Naive thymus-derived CD4-positive, alpha-beta T cell (primary cell): ENCODE measurements at regions of chr6 and their contacts with region 1.

Region 1: GRCh38 chr6:137271245-137272183 is 52.3 kb upstream of the IFNGR1 start:
- DNase-seq: peak in 5 of 9 donors; percentile 8 to 41 (median 27)
- ATAC-seq: peak; percentile 76
- H3K4me3 ChIP-seq: no peak overlapping the region
- H3K4me3 Mint-ChIP-seq: no peak overlapping the region
- H3K27ac ChIP-seq: no peak overlapping the region
- H3K27ac Mint-ChIP-seq: no peak overlapping the region
- H3K4me1 ChIP-seq: peaks cover 0 to 16% of the 10 kb centered on the region in 2 donors
- H3K4me1 Mint-ChIP-seq: peaks cover 0 to 7% (median 0%) of the 10 kb centered on the region in 7 donors
- H3K27me3 ChIP-seq: no peaks in the 10 kb centered on the region
- H3K27me3 Mint-ChIP-seq: peaks cover 5 to 38% (median 6%) of the 10 kb centered on the region in 5 donors

Region 2: DNA sequence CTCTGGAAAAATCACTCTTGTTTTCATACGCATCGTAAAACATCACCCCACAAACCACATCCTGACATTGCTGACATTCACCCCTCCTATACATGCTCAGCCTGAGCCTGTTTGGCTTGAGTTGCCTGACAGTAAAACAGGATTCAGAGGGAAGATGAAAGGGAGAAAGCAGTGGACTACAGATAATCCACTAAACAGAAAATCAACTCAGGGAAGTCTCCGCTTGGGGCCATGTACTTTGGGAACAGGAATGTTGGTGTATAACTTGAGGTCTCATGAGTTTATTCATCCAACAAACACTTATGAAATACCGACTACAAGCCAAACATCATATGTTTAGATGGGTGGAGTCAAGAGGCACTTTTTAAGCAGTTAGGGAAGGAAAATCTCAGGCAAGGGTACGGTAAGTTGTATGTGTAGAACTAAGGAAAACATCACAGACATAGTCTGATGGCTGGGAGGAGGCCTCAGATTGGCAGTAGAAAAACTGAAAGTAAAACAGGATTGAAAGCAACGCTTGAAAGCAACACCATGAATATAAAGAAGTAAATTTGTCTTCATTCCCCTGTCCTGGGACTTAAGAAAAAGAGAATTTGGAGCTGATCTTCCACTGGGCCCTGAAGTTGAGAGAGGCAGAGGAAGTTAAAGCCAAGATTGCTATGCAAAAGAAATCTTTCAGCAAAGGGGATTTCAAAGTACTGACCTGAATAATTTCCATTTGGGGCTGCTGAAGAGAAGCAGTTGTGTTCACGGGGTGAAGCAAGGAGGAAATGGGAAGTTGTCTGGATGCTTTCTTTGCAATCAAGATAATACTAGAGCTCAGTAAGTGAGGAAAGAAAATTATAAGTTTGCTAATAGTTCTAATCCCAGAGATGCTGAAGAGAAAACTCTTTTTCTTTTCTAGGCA is 1391.2 kb before region 1 on chr6:
- CTCF ChIA-PET with region 1: no interaction called
- POLR2A ChIA-PET with region 1: no interaction called
- intact Hi-C with region 1: no loop called
- DNase-seq: peak in 8 of 9 donors; percentile 52 to 86 (median 79)
- ATAC-seq: peak; percentile 95
- H3K4me3 ChIP-seq: peak overlapping the region; percentile 40
- H3K4me3 Mint-ChIP-seq: peak overlapping the region; percentile 81 to 94 (median 86)
- H3K27ac ChIP-seq: peak overlapping the region; percentile 90
- H3K27ac Mint-ChIP-seq: peak overlapping the region; percentile 94 to 99 (median 98)
- H3K4me1 ChIP-seq: peaks cover 16 to 37% of the 10 kb centered on the region in 2 donors
- H3K4me1 Mint-ChIP-seq: peaks cover 31 to 90% (median 79%) of the 10 kb centered on the region in 7 donors
- H3K27me3 ChIP-seq: no peaks in the 10 kb centered on the region
- H3K27me3 Mint-ChIP-seq: no peaks in the 10 kb centered on the region

Region 3: GRCh38 chr6:137094411-137095008 is 177.0 kb before region 1 on chr6:
- CTCF ChIA-PET with region 1: no interaction called
- POLR2A ChIA-PET with region 1: no interaction called
- intact Hi-C with region 1: loop called (anchors 1 to 2 kb)
- DNase-seq: peak in 8 of 9 donors; percentile 17 to 56 (median 40)
- ATAC-seq: peak; percentile 80
- H3K4me3 ChIP-seq: no peak overlapping the region
- H3K4me3 Mint-ChIP-seq: peak overlapping the region in 1 of 10 donors; percentile 33
- H3K27ac ChIP-seq: no peak overlapping the region
- H3K27ac Mint-ChIP-seq: peak overlapping the region in 1 of 9 donors; percentile 11
- H3K4me1 ChIP-seq: peaks cover 0 to 3% of the 10 kb centered on the region in 2 donors
- H3K4me1 Mint-ChIP-seq: peaks cover 0 to 44% (median 0%) of the 10 kb centered on the region in 7 donors
- H3K27me3 ChIP-seq: no peaks in the 10 kb centered on the region
- H3K27me3 Mint-ChIP-seq: peaks cover 0 to 10% (median 0%) of the 10 kb centered on the region in 5 donors

Region 4: DNA sequence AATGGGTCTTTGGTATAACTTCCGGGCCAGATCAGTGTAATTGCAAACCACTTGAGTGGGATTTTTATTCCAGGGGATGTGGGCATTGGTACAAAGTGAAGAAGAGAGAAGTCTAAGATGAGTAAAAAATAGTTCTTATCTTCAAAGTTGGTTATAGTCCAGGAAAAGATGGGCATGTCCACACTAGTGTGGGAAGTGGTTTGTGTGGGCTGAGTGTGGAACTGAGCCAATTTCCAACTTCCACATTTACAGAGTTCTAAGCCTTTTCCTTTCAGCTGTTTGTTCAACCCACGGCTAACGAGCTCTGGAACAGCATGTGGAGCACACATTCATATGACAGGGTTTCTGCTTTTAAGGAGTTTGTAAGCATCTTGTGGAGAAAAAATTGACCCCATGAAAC is 19.9 kb after region 1 on chr6:
- CTCF ChIA-PET with region 1: no interaction called
- POLR2A ChIA-PET with region 1: no interaction called
- intact Hi-C with region 1: no loop called
- DNase-seq: no peak
- ATAC-seq: peak; percentile 82
- H3K4me3 ChIP-seq: no peak overlapping the region
- H3K4me3 Mint-ChIP-seq: no peak overlapping the region
- H3K27ac ChIP-seq: no peak overlapping the region
- H3K27ac Mint-ChIP-seq: no peak overlapping the region
- H3K4me1 ChIP-seq: peaks cover 0 to 6% of the 10 kb centered on the region in 2 donors
- H3K4me1 Mint-ChIP-seq: peaks cover 0 to 13% (median 4%) of the 10 kb centered on the region in 7 donors
- H3K27me3 ChIP-seq: no peaks in the 10 kb centered on the region
- H3K27me3 Mint-ChIP-seq: peaks cover 2 to 27% (median 5%) of the 10 kb centered on the region in 5 donors

Region 5: DNA sequence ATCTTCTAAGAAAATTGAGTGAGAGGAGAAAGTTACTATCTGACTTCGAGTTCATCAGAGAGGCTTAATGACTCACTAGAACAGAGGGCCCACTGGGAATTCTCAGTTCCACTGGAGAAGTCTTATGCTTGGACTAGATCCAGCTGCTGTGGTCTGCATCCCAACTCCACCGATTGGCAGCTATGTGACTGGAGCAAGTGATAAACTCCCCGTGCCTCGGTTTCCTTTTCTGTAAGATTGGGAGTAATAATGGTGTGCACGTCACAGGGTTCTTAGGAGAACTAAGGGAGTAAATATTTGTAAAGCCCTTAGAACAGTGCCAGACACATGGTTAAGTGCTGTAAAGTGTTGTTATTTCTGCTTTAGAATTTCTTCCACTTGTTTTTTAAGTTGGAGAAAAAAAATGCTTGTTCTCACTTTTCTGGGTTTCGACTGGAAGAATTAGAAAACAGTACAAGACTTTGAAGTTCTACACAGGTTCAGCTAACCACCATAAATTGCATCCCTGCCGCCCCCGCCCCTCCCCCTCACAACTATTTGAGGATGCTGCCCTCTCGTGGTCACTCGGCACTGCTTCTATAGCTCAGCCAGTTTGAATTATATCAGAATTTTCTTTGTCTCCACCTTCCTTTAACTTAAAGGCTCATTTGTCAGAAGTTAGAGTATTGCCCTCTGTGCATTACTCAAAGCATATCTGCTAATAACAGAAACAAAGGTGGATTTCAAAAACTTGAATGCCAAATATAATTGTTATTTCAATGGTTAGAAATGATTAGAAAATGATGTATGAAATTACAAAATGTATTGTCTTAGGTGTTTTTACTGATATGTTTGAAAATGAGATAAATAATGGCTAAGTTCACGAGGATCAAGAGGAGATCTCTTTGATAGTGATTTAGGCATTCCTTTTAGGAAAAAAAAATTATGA is 42.7 kb after region 1 on chr6:
- CTCF ChIA-PET with region 1: interaction called, 4 read pairs
- POLR2A ChIA-PET with region 1: interaction called, 4 read pairs
- intact Hi-C with region 1: loop called (anchors 1 kb)
- DNase-seq: peak; percentile 9 to 57 (median 51)
- ATAC-seq: peak; percentile 90
- H3K4me3 ChIP-seq: no peak overlapping the region
- H3K4me3 Mint-ChIP-seq: no peak overlapping the region
- H3K27ac ChIP-seq: no peak overlapping the region
- H3K27ac Mint-ChIP-seq: no peak overlapping the region
- H3K4me1 ChIP-seq: no peaks in the 10 kb centered on the region
- H3K4me1 Mint-ChIP-seq: peaks cover 0 to 10% (median 3%) of the 10 kb centered on the region in 7 donors
- H3K27me3 ChIP-seq: no peaks in the 10 kb centered on the region
- H3K27me3 Mint-ChIP-seq: peaks cover 0 to 22% (median 0%) of the 10 kb centered on the region in 5 donors

Region 6: DNA sequence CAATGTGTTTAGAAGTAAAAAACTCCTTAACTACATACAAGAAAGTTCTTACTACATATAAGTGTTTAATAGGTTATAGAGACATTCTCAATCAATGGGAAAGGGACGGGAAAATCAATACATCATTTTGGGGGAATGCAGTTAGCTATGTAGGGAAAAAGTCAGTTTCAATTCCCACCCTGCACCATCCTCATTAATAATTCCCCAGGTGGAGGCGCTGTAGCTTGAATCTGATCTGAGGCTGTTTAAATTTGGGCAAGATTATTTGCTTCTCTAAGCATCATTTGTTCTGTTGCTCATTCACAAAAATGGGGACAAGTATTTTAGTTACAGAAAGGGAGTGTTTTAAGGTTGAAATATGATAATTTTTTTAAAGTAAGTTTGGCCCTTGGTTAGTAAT is 203.6 kb after region 1 on chr6:
- CTCF ChIA-PET with region 1: no interaction called
- POLR2A ChIA-PET with region 1: no interaction called
- intact Hi-C with region 1: loop called in 1 of 2 experiments (anchors 1 kb)
- DNase-seq: no peak
- ATAC-seq: no peak
- H3K4me3 ChIP-seq: no peak overlapping the region
- H3K4me3 Mint-ChIP-seq: no peak overlapping the region
- H3K27ac ChIP-seq: no peak overlapping the region
- H3K27ac Mint-ChIP-seq: no peak overlapping the region
- H3K4me1 ChIP-seq: no peaks in the 10 kb centered on the region
- H3K4me1 Mint-ChIP-seq: no peaks in the 10 kb centered on the region
- H3K27me3 ChIP-seq: peaks cover 0 to 4% of the 10 kb centered on the region in 2 donors
- H3K27me3 Mint-ChIP-seq: peaks cover 15 to 62% (median 27%) of the 10 kb centered on the region in 5 donors

Region 7: GRCh38 chr6:137589067-137589848 is 317.7 kb after region 1 on chr6:
- CTCF ChIA-PET with region 1: interaction called, 6 read pairs
- POLR2A ChIA-PET with region 1: no interaction called
- intact Hi-C with region 1: loop called (anchors 1 kb)
- DNase-seq: peak in 7 of 9 donors; percentile 33 to 73 (median 60)
- ATAC-seq: peak; percentile 99
- H3K4me3 ChIP-seq: no peak overlapping the region
- H3K4me3 Mint-ChIP-seq: peak overlapping the region in 6 of 10 donors; percentile 5 to 52 (median 19)
- H3K27ac ChIP-seq: no peak overlapping the region
- H3K27ac Mint-ChIP-seq: peak overlapping the region in 2 of 9 donors; percentile 13 to 39
- H3K4me1 ChIP-seq: peaks cover 0 to 6% of the 10 kb centered on the region in 2 donors
- H3K4me1 Mint-ChIP-seq: peaks cover 5 to 19% (median 9%) of the 10 kb centered on the region in 7 donors
- H3K27me3 ChIP-seq: no peaks in the 10 kb centered on the region
- H3K27me3 Mint-ChIP-seq: peaks cover 4 to 59% (median 5%) of the 10 kb centered on the region in 5 donors

Region 8: DNA sequence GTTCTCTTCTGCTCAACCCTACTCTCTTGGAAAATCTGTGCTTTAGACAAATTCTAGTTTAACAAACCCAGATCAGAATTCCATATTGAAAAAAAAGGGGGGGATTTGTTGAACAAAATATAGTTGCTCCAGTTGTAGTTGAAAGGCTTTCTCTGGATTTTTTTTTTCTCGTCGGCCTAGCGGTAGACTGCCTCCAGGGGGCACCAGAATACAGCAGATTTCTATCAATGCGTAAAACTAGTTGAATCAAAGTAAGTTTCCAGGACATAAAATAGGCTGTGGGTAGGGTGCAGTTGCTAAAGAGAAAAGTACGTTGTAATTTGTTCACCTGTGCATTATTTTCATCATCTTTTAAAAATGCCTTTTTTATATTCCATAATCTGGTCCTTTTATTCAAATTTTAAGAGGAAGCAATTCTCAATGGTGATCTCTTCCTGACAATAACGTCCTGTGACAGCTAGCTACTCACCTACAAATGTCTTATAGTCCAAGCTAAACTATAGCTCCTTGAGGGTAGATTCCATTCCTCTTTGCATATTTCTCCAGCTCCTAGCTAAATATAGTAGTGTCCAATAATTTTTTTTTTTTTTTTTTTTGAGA is 730.3 kb after region 1 on chr6:
- CTCF ChIA-PET with region 1: no interaction called
- POLR2A ChIA-PET with region 1: no interaction called
- intact Hi-C with region 1: loop called in 1 of 2 experiments (anchors 10 kb)
- DNase-seq: peak in 8 of 9 donors; percentile 37 to 65 (median 56)
- ATAC-seq: peak; percentile 79
- H3K4me3 ChIP-seq: no peak overlapping the region
- H3K4me3 Mint-ChIP-seq: no peak overlapping the region
- H3K27ac ChIP-seq: no peak overlapping the region
- H3K27ac Mint-ChIP-seq: peak overlapping the region in 1 of 9 donors; percentile 27
- H3K4me1 ChIP-seq: no peaks in the 10 kb centered on the region
- H3K4me1 Mint-ChIP-seq: peaks cover 0 to 16% (median 5%) of the 10 kb centered on the region in 7 donors
- H3K27me3 ChIP-seq: no peaks in the 10 kb centered on the region
- H3K27me3 Mint-ChIP-seq: peaks cover 0 to 11% (median 0%) of the 10 kb centered on the region in 5 donors